ENCODE measurements at regions of chr2 and their contacts with region 1.

Region 1: GRCh38 chr2:157443795-157444640 is at the start of gene CYTIP:
- DNase-seq: peak; percentile 73
- ATAC-seq: peak; percentile 51
- H3K4me3 Mint-ChIP-seq: peak within 1 kb of the TSS; percentile 90
- H3K27ac Mint-ChIP-seq: peak within 1 kb of the TSS; percentile 92
- H3K4me1 Mint-ChIP-seq: peaks cover 35% of the 10 kb centered on the region
- H3K27me3 Mint-ChIP-seq: no peaks in the 10 kb centered on the region
- total RNA-seq, gene CYTIP: 233 to 238 TPM

Region 2: DNA sequence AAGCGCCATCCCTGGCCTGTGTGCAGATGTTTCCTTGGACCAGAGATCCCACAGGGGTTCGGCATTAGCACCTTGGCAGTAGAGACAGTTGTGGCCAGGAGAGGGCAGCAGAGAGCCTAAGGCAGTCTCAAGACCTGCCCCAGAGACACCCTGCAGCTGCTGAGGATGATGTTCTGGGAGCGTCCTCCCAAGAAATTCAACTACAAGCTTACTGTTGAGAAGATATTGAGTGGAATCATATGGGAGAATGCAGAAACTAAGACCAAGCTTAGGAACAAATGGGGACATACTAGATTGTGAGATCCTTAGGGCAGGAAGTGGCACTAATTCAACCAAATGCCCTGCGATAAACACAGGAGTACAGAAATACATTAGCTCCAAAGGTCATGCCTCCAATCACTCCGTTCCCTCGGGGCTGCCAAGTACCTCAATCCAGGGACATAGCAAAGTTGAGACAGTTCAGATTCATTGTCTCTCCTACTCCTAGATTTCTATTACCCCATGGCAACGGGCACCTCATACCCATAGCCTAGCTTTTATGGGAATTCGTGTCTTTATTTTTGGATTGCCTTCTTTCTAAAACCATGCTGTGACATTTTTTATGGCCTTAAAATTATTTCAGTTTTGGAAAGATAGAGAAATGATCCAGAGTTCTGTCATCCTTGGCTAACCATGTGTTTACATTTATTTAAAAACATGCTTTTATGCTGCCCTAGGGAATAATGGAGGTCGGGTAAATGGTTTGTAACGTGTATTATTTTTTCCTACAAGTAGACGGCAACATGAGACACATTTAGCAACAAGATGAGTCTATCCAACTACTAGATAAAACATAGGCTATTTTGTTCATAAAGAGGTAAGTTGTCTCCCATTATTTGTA is 116.2 kb before region 1 on chr2:
- POLR2A ChIA-PET with region 1: interaction called, 16 read pairs
- DNase-seq: peak; percentile 85
- ATAC-seq: peak; percentile 89
- H3K4me3 Mint-ChIP-seq: peak overlapping the region; percentile 66
- H3K27ac Mint-ChIP-seq: peak overlapping the region; percentile 10
- H3K4me1 Mint-ChIP-seq: peaks cover 34% of the 10 kb centered on the region
- H3K27me3 Mint-ChIP-seq: no peaks in the 10 kb centered on the region

Region 3: GRCh38 chr2:157413326-157414035 is 30.5 kb before region 1 on chr2:
- POLR2A ChIA-PET with region 1: interaction called, 470 read pairs
- DNase-seq: no peak
- ATAC-seq: peak; percentile 79
- H3K4me3 Mint-ChIP-seq: peak overlapping the region; percentile 86
- H3K27ac Mint-ChIP-seq: peak overlapping the region; percentile 98
- H3K4me1 Mint-ChIP-seq: peaks cover 73% of the 10 kb centered on the region
- H3K27me3 Mint-ChIP-seq: no peaks in the 10 kb centered on the region

Region 4: GRCh38 chr2:157468931-157469708 is 25.1 kb after region 1 on chr2:
- POLR2A ChIA-PET with region 1: interaction called, 299 read pairs
- DNase-seq: no peak
- ATAC-seq: peak; percentile 72
- H3K4me3 Mint-ChIP-seq: peak overlapping the region; percentile 78
- H3K27ac Mint-ChIP-seq: peak overlapping the region; percentile 97
- H3K4me1 Mint-ChIP-seq: peaks cover 89% of the 10 kb centered on the region
- H3K27me3 Mint-ChIP-seq: no peaks in the 10 kb centered on the region

Region 5: GRCh38 chr2:157488877-157489276 is 44.9 kb after region 1 on chr2:
- POLR2A ChIA-PET with region 1: interaction called, 19 read pairs
- DNase-seq: no peak
- ATAC-seq: no peak
- H3K4me3 Mint-ChIP-seq: peak overlapping the region; percentile 65
- H3K27ac Mint-ChIP-seq: peak overlapping the region; percentile 46
- H3K4me1 Mint-ChIP-seq: peaks cover 65% of the 10 kb centered on the region
- H3K27me3 Mint-ChIP-seq: no peaks in the 10 kb centered on the region